Activated naive CD4-positive, alpha-beta T cell treated with anti-CD3 and anti-CD28 coated beads for 36 hours (primary cell): ENCODE measurements at regions of chr20 and their contacts with region 1.

Region 1: DNA sequence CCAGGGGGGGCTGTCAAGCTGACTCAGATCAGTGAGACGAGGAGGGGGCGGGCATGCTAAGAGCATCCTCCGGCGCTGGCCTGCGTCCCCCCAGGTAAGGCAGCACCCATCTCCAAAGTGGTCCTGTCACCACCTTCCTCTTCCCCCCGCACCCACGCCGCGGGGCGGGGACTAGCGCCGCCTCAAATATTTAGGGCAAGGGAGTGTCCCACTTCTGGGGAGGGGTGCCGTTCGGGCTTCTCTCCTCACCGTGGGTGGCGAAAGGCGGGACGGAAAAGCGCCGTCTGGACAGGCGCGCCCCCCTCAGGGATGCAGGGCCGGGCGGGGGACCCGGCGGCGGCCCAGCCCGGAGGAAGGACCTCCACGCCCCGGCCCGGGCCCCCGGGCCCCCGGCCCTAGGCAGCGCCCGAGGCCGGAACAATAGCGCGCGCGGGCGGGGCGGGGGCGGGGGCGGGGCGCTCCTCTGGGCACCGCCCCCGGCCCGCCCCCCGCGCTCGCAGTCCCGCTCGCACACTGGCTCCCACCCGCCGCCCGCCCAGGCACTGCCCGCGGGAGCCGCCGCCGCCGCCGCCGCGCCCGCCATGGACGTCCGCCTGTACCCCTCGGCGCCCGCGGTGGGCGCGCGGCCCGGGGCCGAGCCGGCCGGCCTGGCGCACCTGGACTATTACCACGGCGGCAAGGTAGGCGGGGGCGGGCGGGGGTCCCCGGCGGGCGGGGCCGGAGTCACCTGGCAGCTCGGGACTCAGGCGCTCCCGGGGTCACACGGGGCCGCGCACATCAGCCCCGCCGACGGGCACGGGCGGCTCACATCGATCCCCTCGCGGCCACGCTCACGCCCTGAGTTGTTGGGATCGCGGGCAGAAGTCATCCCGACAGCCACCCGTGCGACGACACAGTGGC is at the start of gene TOX2:
- DNase-seq: peak; percentile 39
- H3K4me3 Mint-ChIP-seq: peak within 1 kb of the TSS; percentile 73
- H3K27ac Mint-ChIP-seq: no peak within 1 kb of the TSS
- H3K4me1 Mint-ChIP-seq: peaks cover 32% of the 10 kb centered on the region
- H3K27me3 Mint-ChIP-seq: peaks cover 43% of the 10 kb centered on the region
- total RNA-seq, gene TOX2: 1.2 to 1.6 TPM

Region 2: GRCh38 chr20:43809206-43809819 is 105.2 kb before region 1 on chr20:
- CTCF ChIA-PET with region 1: no interaction called
- intact Hi-C with region 1: no loop called
- DNase-seq: no peak
- H3K4me3 Mint-ChIP-seq: no peak overlapping the region
- H3K27ac Mint-ChIP-seq: no peak overlapping the region
- H3K4me1 Mint-ChIP-seq: no peaks in the 10 kb centered on the region
- H3K27me3 Mint-ChIP-seq: peaks cover 3% of the 10 kb centered on the region

Region 3: GRCh38 chr20:43925801-43926200 is 11.2 kb after region 1 on chr20:
- CTCF ChIA-PET with region 1: no interaction called
- intact Hi-C with region 1: loop called (anchors 1 kb)
- DNase-seq: peak; percentile 60
- H3K4me3 Mint-ChIP-seq: no peak overlapping the region
- H3K27ac Mint-ChIP-seq: no peak overlapping the region
- H3K4me1 Mint-ChIP-seq: peaks cover 43% of the 10 kb centered on the region
- H3K27me3 Mint-ChIP-seq: peaks cover 9% of the 10 kb centered on the region

Region 4: GRCh38 chr20:44001667-44002596 is 87.4 kb after region 1 on chr20:
- CTCF ChIA-PET with region 1: no interaction called
- intact Hi-C with region 1: no loop called
- DNase-seq: peak; percentile 71
- H3K4me3 Mint-ChIP-seq: no peak overlapping the region
- H3K27ac Mint-ChIP-seq: peak overlapping the region; percentile 0
- H3K4me1 Mint-ChIP-seq: peaks cover 14% of the 10 kb centered on the region
- H3K27me3 Mint-ChIP-seq: peaks cover 3% of the 10 kb centered on the region

Region 5: DNA sequence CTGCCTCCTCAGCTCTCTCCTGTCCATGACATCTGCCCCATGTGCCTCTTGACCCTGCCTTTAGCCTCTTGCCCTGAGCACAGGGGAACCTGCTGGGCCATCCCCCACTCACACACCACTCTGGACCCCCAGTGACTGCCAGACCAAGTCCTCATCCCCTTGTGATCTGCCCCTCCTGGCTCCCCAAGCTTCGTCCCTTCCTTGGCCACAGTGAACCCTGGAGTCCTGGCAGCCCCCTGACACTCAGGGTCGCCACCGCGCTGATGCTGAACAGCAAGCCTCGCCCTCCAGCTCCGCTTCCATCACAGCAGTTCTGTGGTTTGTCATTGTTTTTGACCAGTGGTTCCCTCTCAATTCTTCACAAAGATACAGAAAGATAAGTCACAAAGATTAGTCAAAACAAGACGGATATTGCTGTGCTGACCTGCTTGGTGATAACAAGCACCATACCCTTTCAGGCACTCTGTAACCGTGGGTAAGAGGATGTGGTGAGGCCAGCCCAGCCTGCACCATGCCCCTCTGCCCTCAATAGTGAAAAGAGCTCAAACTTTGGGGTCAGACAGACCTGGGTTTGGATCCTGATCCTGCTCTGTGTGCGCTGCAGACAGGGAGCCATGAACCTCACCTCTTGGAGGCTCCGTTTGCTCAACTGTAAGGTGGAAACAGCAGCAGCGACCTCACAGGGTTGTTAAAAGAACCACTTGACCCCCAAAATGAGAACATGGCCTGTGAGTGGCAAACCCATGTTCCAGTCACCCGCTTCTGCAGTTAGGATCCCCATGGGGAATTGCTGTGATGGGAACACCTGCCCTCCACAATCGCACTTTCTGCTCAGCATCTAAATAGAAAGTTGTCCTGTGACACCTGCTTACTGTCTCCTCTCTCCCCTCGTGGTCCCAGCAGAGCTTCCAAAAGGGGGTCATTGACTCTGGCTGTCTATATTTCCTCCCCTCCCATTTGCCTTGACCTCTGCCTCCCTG is 114.6 kb after region 1 on chr20:
- CTCF ChIA-PET with region 1: no interaction called
- intact Hi-C with region 1: no loop called
- DNase-seq: peak; percentile 60
- H3K4me3 Mint-ChIP-seq: no peak overlapping the region
- H3K27ac Mint-ChIP-seq: peak overlapping the region; percentile 79
- H3K4me1 Mint-ChIP-seq: peaks cover 33% of the 10 kb centered on the region
- H3K27me3 Mint-ChIP-seq: peaks cover 3% of the 10 kb centered on the region

Region 6: DNA sequence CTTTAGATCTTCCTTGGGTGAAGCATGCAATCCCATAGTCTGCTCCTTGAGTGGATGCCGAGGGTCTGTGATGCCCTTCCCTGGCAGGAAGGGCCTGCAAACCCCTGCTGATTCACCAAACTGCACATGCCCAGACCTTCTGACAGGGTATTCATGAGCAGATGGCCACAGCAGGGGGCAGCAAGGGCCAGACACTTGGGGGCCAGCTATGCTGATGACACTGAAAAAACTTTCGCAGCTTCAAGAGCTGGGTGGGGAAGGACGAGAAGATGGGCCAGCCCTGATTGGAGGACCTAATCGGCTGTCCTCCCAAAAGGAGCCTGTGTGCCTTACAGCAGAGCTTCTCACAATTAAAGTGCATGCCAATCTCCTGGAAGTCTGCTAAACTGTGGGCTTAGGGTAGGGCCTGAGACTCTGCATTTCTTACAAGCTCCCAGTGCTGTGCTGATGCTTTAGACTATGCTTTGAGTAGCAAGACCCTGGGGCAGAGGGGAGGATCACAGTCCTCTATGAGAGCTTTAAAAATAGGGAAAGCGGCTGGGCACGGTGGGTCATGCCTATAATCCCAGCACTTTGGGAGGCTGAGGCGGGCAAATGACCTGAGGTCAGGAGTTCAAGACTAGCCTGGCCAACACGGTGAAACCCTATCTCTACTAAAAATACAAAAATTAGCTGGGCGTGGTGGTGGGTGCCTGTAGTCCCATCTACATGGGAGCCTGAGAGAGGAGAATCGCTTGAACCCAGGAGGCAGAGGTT is 317.3 kb after region 1 on chr20:
- CTCF ChIA-PET with region 1: no interaction called
- intact Hi-C with region 1: no loop called
- DNase-seq: no peak
- H3K4me3 Mint-ChIP-seq: no peak overlapping the region
- H3K27ac Mint-ChIP-seq: no peak overlapping the region
- H3K4me1 Mint-ChIP-seq: peaks cover 9% of the 10 kb centered on the region
- H3K27me3 Mint-ChIP-seq: no peaks in the 10 kb centered on the region